HCT116 (cell line): ENCODE measurements at regions of chr11 and their contacts with region 1.

Region 1: DNA sequence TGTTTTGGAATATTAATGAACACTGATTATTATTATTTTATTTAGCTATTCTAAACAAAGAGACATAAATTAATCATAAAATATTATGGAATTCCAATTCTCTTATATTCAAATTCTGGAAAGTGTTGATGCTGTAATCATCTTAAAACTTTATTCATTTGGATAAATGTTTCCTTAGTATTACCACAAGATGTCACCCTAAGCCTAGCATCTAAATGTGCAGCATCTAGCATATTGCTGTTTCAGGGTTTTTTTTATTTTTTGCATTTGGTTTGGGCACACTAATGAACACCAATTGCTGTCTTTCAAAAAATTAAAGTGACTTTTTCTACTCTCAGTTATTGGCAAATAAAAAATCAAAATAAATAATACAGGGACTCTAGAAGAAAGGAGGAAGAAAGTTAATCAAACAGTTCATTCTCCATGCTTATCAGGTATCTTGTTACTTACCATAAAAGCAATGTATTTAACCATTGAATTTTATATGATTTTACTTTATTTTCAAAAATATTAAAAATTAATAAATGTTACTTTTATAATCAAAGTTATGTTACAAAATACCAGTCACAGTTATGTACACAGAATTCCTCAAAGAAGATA is 31.8 kb downstream of the DLG2 start:
- DNase-seq: peak; percentile 46
- ATAC-seq: peak; percentile 62
- H3K4me3 ChIP-seq: no peak overlapping the region
- H3K27ac ChIP-seq: no peak overlapping the region
- H3K4me1 ChIP-seq: no peaks in the 10 kb centered on the region
- H3K27me3 ChIP-seq: no peaks in the 10 kb centered on the region
- CTCF ChIP-seq: peak; percentile 29 to 80 (median 65); a peak in 5 of 6 replicates
- POLR2A ChIP-seq: no peak
- RAD21 ChIP-seq: peak; percentile 89

Region 2: DNA sequence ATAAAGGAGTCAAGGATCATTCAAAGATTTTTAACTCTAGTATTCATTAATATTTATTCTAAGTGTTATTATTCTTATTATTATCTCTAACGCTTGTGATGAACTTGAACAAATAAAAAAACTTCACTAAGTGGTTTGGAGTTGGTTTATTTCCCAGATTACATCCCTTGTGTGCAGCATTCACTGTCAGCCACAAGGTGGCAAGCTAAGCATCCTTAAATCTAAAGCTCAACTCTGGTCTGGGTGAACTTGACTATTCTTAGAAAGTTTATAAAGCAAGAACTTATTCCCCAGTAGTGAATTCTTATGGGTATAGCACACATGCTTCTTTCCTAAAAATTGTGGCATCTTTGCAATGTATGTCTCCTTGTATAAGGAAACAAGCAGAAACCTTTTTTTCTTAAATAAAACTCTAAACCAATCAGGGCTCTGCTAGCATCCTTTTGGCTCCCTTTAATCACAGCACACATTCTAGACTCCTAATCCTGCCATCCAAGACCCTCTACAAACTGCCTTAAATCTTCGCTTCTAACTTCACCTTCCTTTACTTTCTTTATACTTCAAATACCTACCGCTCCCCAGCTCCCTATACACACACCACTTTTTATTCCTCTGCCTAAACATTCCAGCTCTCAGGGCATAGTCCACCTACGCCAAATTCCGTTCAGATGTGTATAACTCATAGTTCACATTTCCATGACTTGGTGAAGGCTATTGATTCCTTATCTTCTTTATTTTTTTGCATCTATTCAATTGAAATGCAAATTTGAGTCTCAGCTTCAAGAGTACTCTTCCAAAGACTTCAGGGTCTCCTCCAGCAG is 1037.1 kb before region 1 on chr11:
- CTCF ChIA-PET with region 1: interaction called, 10 read pairs
- POLR2A ChIA-PET with region 1: no interaction called
- RAD21 ChIA-PET with region 1: no interaction called
- intact Hi-C with region 1: loop called (anchors 1 kb)
- DNase-seq: peak; percentile 18
- ATAC-seq: peak; percentile 78
- H3K4me3 ChIP-seq: no peak overlapping the region
- H3K27ac ChIP-seq: no peak overlapping the region
- H3K4me1 ChIP-seq: no peaks in the 10 kb centered on the region
- H3K27me3 ChIP-seq: no peaks in the 10 kb centered on the region
- CTCF ChIP-seq: peak; percentile 25 to 79 (median 70); a peak in 5 of 6 replicates
- POLR2A ChIP-seq: no peak
- RAD21 ChIP-seq: peak; percentile 59

Region 3: DNA sequence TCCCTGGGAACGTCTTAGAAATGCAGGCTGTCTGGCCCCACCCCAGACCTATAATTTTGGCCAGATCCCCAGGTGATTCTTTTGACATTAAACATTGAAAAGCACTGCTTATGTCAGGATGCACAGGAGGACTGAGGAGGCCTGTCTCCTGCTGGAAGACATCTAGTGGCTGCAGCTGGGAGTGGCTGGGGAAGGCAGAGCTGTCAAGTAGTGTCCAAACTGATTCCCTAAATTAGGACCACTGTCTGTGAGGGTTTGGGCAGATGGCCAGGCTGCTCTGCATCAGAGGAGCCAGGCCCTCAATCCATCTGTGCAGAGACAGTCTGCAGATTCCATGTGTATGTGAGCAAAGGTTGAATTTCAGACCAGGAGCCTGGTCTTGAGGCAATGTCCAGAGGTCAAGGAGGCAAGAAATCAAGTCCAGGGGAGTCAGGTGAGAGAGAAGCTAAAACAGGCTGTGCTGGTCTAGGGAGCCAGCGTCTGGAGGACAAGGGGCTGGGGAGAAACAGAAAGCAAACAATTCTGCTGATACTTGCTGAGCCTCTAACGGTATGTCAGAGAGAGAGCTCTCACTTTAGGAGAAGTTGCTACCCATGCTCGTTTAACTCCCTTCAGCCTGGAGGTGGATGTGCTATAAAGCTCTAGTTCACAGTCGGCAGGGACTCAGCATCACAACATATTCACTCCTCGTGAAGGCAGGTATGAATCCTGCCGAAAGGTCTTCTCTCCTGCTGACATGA is 230.9 kb after region 1 on chr11:
- CTCF ChIA-PET with region 1: no interaction called
- POLR2A ChIA-PET with region 1: no interaction called
- RAD21 ChIA-PET with region 1: no interaction called
- intact Hi-C with region 1: loop called (anchors 5 kb)
- DNase-seq: no peak
- ATAC-seq: peak; percentile 70
- H3K4me3 ChIP-seq: no peak overlapping the region
- H3K27ac ChIP-seq: no peak overlapping the region
- H3K4me1 ChIP-seq: peaks cover 26 to 60% of the 10 kb centered on the region in 2 experiments
- H3K27me3 ChIP-seq: no peaks in the 10 kb centered on the region
- CTCF ChIP-seq: peak; percentile 47 to 72 (median 70); a peak in 5 of 6 replicates
- POLR2A ChIP-seq: no peak
- RAD21 ChIP-seq: peak; percentile 63

Region 4: DNA sequence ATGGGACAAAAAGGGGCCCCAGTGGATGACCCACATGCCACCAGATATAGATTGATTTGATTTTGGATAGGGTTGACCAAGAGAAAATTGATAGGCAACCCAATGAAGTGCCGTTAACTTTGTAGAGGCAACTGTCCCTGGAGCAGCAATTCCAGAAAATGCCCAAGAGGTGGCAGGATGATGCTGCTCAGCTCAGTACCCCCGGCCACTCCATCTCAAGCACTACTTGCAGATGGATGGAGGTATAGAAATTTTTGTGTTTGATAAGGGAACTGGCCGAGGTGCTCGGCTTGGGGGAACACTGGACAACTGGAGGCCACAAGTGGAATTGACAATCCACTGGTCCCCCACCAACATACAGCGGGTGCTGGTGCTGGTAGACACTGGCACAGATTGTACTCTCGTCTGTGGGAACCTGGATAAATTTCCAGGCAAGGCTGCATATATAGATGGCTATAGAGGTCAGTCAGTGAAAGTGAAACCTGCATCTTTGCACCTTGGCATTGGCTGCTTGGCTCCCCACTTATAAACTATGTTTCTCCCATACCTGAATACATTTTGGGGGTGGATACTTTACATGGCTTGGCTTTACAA is 346.1 kb after region 1 on chr11:
- CTCF ChIA-PET with region 1: no interaction called
- POLR2A ChIA-PET with region 1: no interaction called
- RAD21 ChIA-PET with region 1: no interaction called
- intact Hi-C with region 1: loop called (anchors 10 kb)
- DNase-seq: no peak
- ATAC-seq: peak; percentile 80
- H3K4me3 ChIP-seq: no peak overlapping the region
- H3K27ac ChIP-seq: no peak overlapping the region
- H3K4me1 ChIP-seq: no peaks in the 10 kb centered on the region
- H3K27me3 ChIP-seq: no peaks in the 10 kb centered on the region
- CTCF ChIP-seq: peak; percentile 47 to 59 (median 53); a peak in 5 of 6 replicates
- POLR2A ChIP-seq: no peak
- RAD21 ChIP-seq: peak; percentile 75

Region 5: GRCh38 chr11:86418917-86419316 is 823.5 kb after region 1 on chr11:
- CTCF ChIA-PET with region 1: no interaction called
- POLR2A ChIA-PET with region 1: no interaction called
- RAD21 ChIA-PET with region 1: no interaction called
- intact Hi-C with region 1: loop called (anchors 5 kb)
- DNase-seq: no peak
- ATAC-seq: peak; percentile 73
- H3K4me3 ChIP-seq: no peak overlapping the region
- H3K27ac ChIP-seq: no peak overlapping the region
- H3K4me1 ChIP-seq: no peaks in the 10 kb centered on the region
- H3K27me3 ChIP-seq: no peaks in the 10 kb centered on the region
- CTCF ChIP-seq: peak in 1 of 3 experiments; percentile 41; a peak in 2 of 6 replicates
- POLR2A ChIP-seq: no peak
- RAD21 ChIP-seq: peak; percentile 53; the same call in 1 of the 2 replicates